ENCODE measurements at regions of chr1 and their contacts with region 1.

Region 1: GRCh38 chr1:23496490-23497181 is 12.7 kb upstream of the ASAP3 start:
- DNase-seq: no peak
- H3K4me3 Mint-ChIP-seq: no peak overlapping the region
- H3K27ac Mint-ChIP-seq: no peak overlapping the region
- H3K4me1 Mint-ChIP-seq: peaks cover 5% of the 10 kb centered on the region
- H3K27me3 Mint-ChIP-seq: peaks cover 11% of the 10 kb centered on the region

Region 2: DNA sequence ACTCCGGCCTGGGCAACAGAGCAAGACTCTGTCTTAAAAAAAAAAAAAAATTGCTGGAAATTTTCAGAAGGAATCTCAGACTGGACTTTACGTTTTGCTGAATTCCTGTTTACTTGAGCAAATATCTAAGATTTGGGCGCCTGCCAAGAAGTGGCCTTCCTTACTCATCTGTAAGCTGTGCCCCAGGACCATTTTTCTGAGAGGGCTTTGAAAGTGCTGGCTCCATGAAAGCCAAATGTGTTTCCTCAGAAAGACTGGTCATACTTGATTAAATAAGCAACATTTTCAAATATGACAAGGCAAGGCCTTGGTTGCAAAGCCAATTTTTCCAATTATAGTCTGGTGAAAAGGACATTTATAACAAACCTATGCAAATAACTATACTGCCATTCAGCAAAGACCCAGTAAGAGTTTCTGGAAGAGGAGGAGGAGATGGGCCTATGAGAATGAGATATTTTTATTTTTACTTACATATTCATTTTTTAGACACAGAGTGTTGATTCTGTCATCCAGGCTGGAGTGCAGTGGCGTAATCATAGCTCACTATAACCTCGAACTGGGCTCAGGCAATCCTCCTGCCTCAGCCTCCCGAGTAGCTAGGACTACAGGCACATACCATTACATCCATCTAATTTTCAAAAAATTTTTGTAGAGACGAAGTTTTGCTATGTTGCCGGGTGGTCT is 223.0 kb before region 1 on chr1:
- CTCF ChIA-PET with region 1: no interaction called
- POLR2A ChIA-PET with region 1: no interaction called
- DNase-seq: no peak
- H3K4me3 Mint-ChIP-seq: no peak overlapping the region
- H3K27ac Mint-ChIP-seq: no peak overlapping the region
- H3K4me1 Mint-ChIP-seq: no peaks in the 10 kb centered on the region
- H3K27me3 Mint-ChIP-seq: peaks cover 27% of the 10 kb centered on the region

Region 3: GRCh38 chr1:23376890-23377811 is 119.5 kb before region 1 on chr1:
- CTCF ChIA-PET with region 1: no interaction called
- POLR2A ChIA-PET with region 1: no interaction called
- DNase-seq: no peak
- H3K4me3 Mint-ChIP-seq: no peak overlapping the region
- H3K27ac Mint-ChIP-seq: no peak overlapping the region
- H3K4me1 Mint-ChIP-seq: no peaks in the 10 kb centered on the region
- H3K27me3 Mint-ChIP-seq: peaks cover 5% of the 10 kb centered on the region

Region 4: DNA sequence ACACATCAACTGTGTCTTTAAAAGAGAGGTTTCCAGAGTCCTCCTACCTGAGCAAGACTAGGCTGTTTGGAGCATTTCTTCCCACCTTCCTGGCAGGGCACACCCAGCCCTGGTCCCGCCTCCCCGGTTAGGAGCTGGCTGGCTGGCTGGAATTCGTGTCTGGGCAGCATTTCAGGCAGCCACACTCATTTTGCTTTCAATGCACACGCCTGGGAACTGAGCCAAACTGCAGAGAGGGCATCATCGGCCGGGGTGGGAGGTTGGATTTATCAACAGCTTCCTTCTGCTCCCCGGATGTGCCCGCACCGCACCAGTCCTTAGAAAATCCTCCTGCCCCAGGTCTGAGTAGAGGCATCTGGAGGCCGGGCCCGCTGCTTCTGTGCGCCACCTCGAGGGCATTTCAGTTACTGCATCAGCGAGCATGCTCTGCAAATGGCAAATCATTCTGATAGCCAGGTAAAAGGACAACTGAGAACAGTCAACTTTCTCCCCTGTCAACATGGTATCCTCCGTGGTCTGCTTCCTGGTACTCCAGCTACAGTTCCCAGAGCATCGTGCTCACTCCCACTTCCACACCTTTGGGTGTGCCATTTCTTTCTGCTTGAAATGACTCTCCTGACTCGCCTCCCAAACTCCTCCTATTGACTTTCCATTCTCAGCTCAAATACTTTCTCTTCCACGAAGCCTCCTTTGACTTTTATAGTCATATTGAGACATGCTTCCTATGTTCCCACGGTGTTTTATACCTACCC is 92.7 kb before region 1 on chr1:
- CTCF ChIA-PET with region 1: no interaction called
- POLR2A ChIA-PET with region 1: no interaction called
- DNase-seq: peak; percentile 87
- H3K4me3 Mint-ChIP-seq: no peak overlapping the region
- H3K27ac Mint-ChIP-seq: no peak overlapping the region
- H3K4me1 Mint-ChIP-seq: peaks cover 18% of the 10 kb centered on the region
- H3K27me3 Mint-ChIP-seq: no peaks in the 10 kb centered on the region

Region 5: DNA sequence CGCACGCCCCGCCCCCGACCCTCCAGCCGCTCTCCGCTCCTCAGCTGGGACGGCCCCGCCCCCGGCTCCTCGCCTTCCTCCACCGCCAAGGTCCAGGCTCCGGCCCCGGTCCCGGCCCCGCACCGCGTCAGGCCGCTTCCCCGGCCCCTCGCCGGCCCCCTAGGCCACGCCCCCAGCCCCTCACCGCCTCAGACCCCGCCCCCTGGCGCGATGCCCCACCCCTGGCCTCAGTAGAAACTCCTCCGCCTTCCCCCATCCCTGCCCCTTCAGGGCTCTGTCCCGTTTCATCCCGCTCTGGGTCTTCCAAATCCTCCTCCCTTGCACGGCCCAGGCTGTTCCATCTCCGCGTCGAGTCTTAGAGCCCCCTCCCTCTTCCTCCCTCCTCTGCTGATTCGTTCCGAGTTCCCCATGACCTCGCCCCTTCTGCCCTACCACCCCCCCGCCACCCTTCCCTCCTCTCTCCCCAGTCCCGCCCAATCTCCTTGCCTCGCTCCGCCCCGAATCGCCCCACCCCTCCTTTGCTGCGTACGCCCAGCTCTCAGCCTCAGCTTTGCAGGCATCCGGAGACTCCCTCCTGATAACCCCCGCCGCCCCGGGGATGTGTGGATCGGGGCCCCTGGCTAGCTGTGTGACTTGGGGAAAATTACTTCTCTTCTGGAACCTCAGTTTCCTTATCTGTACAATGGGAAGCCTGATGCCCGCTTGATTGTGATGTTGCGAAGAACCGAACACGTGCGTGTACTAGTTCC is 12.2 kb before region 1 on chr1:
- CTCF ChIA-PET with region 1: interaction called, 53 read pairs
- POLR2A ChIA-PET with region 1: interaction called, 8 read pairs
- DNase-seq: peak; percentile 93
- H3K4me3 Mint-ChIP-seq: peak overlapping the region; percentile 77
- H3K27ac Mint-ChIP-seq: peak overlapping the region; percentile 31
- H3K4me1 Mint-ChIP-seq: peaks cover 26% of the 10 kb centered on the region
- H3K27me3 Mint-ChIP-seq: peaks cover 65% of the 10 kb centered on the region

Region 6: GRCh38 chr1:23507507-23507906 is 10.9 kb after region 1 on chr1:
- CTCF ChIA-PET with region 1: interaction called, 26 read pairs
- POLR2A ChIA-PET with region 1: interaction called, 5 read pairs
- DNase-seq: no peak
- H3K4me3 Mint-ChIP-seq: no peak overlapping the region
- H3K27ac Mint-ChIP-seq: no peak overlapping the region
- H3K4me1 Mint-ChIP-seq: peaks cover 6% of the 10 kb centered on the region
- H3K27me3 Mint-ChIP-seq: no peaks in the 10 kb centered on the region

Region 7: GRCh38 chr1:23514111-23514679 is 17.6 kb after region 1 on chr1:
- CTCF ChIA-PET with region 1: interaction called, 26 read pairs
- POLR2A ChIA-PET with region 1: interaction called, 5 read pairs
- DNase-seq: no peak
- H3K4me3 Mint-ChIP-seq: no peak overlapping the region
- H3K27ac Mint-ChIP-seq: no peak overlapping the region
- H3K4me1 Mint-ChIP-seq: peaks cover 4% of the 10 kb centered on the region
- H3K27me3 Mint-ChIP-seq: no peaks in the 10 kb centered on the region

Region 8: GRCh38 chr1:23539698-23540266 is 43.1 kb after region 1 on chr1:
- CTCF ChIA-PET with region 1: interaction called, 298 read pairs
- POLR2A ChIA-PET with region 1: interaction called, 37 read pairs
- DNase-seq: peak; percentile 95
- H3K4me3 Mint-ChIP-seq: no peak overlapping the region
- H3K27ac Mint-ChIP-seq: peak overlapping the region; percentile 38
- H3K4me1 Mint-ChIP-seq: peaks cover 28% of the 10 kb centered on the region
- H3K27me3 Mint-ChIP-seq: peaks cover 6% of the 10 kb centered on the region

Region 9: GRCh38 chr1:23664837-23665795 is 168.5 kb after region 1 on chr1:
- CTCF ChIA-PET with region 1: interaction called, 12 read pairs
- POLR2A ChIA-PET with region 1: no interaction called
- DNase-seq: peak; percentile 26
- H3K4me3 Mint-ChIP-seq: no peak overlapping the region
- H3K27ac Mint-ChIP-seq: peak overlapping the region; percentile 51
- H3K4me1 Mint-ChIP-seq: peaks cover 10% of the 10 kb centered on the region
- H3K27me3 Mint-ChIP-seq: peaks cover 2% of the 10 kb centered on the region